B cell (primary cell): ENCODE measurements at regions of chr11 and their contacts with region 1.

Region 1: GRCh38 chr11:65711785-65712632 is at the start of gene KAT5:
- DNase-seq: peak; percentile 100
- ATAC-seq: peak; percentile 82
- H3K4me3 ChIP-seq: peak within 1 kb of the TSS; percentile 41 to 94 (median 84)
- H3K4me3 Mint-ChIP-seq: peak within 1 kb of the TSS; percentile 92
- H3K27ac ChIP-seq: peak within 1 kb of the TSS; percentile 98 to 99
- H3K27ac Mint-ChIP-seq: peak within 1 kb of the TSS; percentile 99
- H3K4me1 ChIP-seq: peaks cover 10 to 17% of the 10 kb centered on the region in 2 donors
- H3K4me1 Mint-ChIP-seq: peaks cover 27% of the 10 kb centered on the region
- H3K27me3 ChIP-seq: no peaks in the 10 kb centered on the region
- H3K27me3 Mint-ChIP-seq: no peaks in the 10 kb centered on the region
- CTCF ChIP-seq: peak; percentile 98
- total RNA-seq, gene KAT5: 134 and 142 TPM in 2 replicates

Region 2: GRCh38 chr11:65652511-65653231 is 59.3 kb before region 1 on chr11:
- CTCF ChIA-PET with region 1: interaction called, 6 read pairs
- POLR2A ChIA-PET with region 1: interaction called, 6 read pairs
- intact Hi-C with region 1: loop called (anchors 1 kb)
- DNase-seq: peak; percentile 98
- ATAC-seq: peak; percentile 89
- H3K4me3 ChIP-seq: peak overlapping the region; percentile 22 to 74 (median 69)
- H3K4me3 Mint-ChIP-seq: peak overlapping the region; percentile 96
- H3K27ac ChIP-seq: peak overlapping the region; percentile 90 to 93
- H3K27ac Mint-ChIP-seq: peak overlapping the region; percentile 98
- H3K4me1 ChIP-seq: peaks cover 22 to 44% of the 10 kb centered on the region in 2 donors
- H3K4me1 Mint-ChIP-seq: peaks cover 57% of the 10 kb centered on the region
- H3K27me3 ChIP-seq: no peaks in the 10 kb centered on the region
- H3K27me3 Mint-ChIP-seq: no peaks in the 10 kb centered on the region
- CTCF ChIP-seq: no peak

Region 3: GRCh38 chr11:65779851-65780577 is 68.0 kb after region 1 on chr11:
- CTCF ChIA-PET with region 1: interaction called, 22 read pairs
- POLR2A ChIA-PET with region 1: interaction called, 10 read pairs
- intact Hi-C with region 1: loop called (anchors 1 kb)
- DNase-seq: peak; percentile 87
- ATAC-seq: peak; percentile 65
- H3K4me3 ChIP-seq: peak overlapping the region; percentile 42 to 81 (median 74)
- H3K4me3 Mint-ChIP-seq: peak overlapping the region; percentile 89
- H3K27ac ChIP-seq: peak overlapping the region; percentile 16 to 79
- H3K27ac Mint-ChIP-seq: peak overlapping the region; percentile 83
- H3K4me1 ChIP-seq: peaks cover 12 to 18% of the 10 kb centered on the region in 2 donors
- H3K4me1 Mint-ChIP-seq: peaks cover 15% of the 10 kb centered on the region
- H3K27me3 ChIP-seq: no peaks in the 10 kb centered on the region
- H3K27me3 Mint-ChIP-seq: no peaks in the 10 kb centered on the region
- CTCF ChIP-seq: peak; percentile 100

Region 4: DNA sequence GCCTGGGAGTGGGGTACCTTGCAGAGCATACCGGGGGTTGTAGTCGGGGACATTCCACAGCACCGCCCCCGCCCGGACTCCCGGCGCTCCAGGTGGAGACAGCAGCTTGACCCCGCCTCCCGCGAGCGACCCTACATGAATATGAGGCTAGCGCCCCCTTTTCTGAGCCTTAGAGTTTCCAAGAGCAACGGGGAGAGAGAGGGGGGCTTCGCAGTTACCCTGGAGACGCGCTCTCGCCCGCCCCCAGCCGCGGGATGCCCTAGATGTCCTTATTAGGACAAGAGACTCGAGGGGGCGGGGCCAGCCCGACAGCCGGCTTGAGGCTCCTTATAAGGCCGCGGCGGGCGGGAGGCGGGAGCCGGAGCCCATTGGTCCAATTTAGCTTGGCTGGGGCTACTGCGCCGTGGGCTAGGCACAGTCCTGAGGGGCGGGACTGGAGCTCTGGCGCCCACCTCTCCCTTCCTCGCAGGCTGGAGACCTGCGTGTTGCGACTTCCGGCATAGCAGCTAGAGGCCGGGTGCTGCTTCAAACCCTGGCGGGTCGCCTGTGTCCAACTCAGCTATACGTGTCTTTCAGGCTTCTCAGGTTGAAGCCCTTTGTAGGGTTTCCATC is 147.3 kb after region 1 on chr11:
- CTCF ChIA-PET with region 1: interaction called, 9 read pairs
- POLR2A ChIA-PET with region 1: interaction called, 13 read pairs
- intact Hi-C with region 1: loop called (anchors 1 kb)
- DNase-seq: peak; percentile 97
- ATAC-seq: peak; percentile 62
- H3K4me3 ChIP-seq: peak overlapping the region; percentile 81 to 98 (median 95)
- H3K4me3 Mint-ChIP-seq: peak overlapping the region; percentile 92
- H3K27ac ChIP-seq: peak overlapping the region; percentile 77 to 89
- H3K27ac Mint-ChIP-seq: peak overlapping the region; percentile 98
- H3K4me1 ChIP-seq: peaks cover 27 to 54% of the 10 kb centered on the region in 2 donors
- H3K4me1 Mint-ChIP-seq: peaks cover 47% of the 10 kb centered on the region
- H3K27me3 ChIP-seq: no peaks in the 10 kb centered on the region
- H3K27me3 Mint-ChIP-seq: no peaks in the 10 kb centered on the region
- CTCF ChIP-seq: no peak

Region 5: DNA sequence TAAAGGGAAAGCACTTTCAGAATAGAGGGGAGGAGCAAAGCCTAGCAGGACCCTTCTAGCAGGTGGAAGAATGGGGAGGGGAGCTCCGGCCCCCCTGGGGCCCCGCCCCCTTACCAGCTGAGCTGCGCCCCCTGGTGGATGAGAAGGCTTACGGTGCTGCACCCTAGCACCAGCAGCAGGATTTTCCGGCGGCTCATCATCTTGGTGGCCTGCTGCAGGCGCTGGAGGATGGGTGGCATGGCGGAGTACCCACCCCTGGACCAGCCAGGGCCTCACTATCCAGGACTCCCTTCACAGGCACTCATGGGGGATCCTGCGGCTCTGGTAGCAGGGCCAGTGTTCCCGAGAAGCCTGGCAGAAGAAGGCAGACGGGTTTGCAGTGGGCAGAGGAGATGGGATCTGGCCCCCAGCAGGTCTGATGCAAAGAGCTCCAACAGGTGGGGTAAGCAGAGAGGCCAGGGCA is 333.2 kb after region 1 on chr11:
- CTCF ChIA-PET with region 1: interaction called, 16 read pairs
- POLR2A ChIA-PET with region 1: no interaction called
- intact Hi-C with region 1: no loop called
- DNase-seq: peak; percentile 88
- ATAC-seq: peak; percentile 96
- H3K4me3 ChIP-seq: no peak overlapping the region
- H3K4me3 Mint-ChIP-seq: no peak overlapping the region
- H3K27ac ChIP-seq: no peak overlapping the region
- H3K27ac Mint-ChIP-seq: peak overlapping the region; percentile 7
- H3K4me1 ChIP-seq: peaks cover 10 to 15% of the 10 kb centered on the region in 2 donors
- H3K4me1 Mint-ChIP-seq: peaks cover 16% of the 10 kb centered on the region
- H3K27me3 ChIP-seq: peaks cover 0 to 35% (median 5%) of the 10 kb centered on the region in 4 experiments
- H3K27me3 Mint-ChIP-seq: peaks cover 12% of the 10 kb centered on the region
- CTCF ChIP-seq: peak; percentile 94